MCF 10A (cell line): ENCODE measurements at regions of chr20 and their contacts with region 1.

Region 1: GRCh38 chr20:37527638-37528441 is at the start of gene BLCAP:
- DNase-seq: peak; percentile 90
- H3K4me3 Mint-ChIP-seq: peak within 1 kb of the TSS; percentile 72
- H3K27ac Mint-ChIP-seq: peak within 1 kb of the TSS; percentile 100
- H3K4me1 Mint-ChIP-seq: peaks cover 45% of the 10 kb centered on the region
- H3K27me3 Mint-ChIP-seq: no peaks in the 10 kb centered on the region
- CTCF ChIP-seq: no peak
- total RNA-seq, gene BLCAP: 88.5 and 105 TPM in 2 replicates

Region 2: DNA sequence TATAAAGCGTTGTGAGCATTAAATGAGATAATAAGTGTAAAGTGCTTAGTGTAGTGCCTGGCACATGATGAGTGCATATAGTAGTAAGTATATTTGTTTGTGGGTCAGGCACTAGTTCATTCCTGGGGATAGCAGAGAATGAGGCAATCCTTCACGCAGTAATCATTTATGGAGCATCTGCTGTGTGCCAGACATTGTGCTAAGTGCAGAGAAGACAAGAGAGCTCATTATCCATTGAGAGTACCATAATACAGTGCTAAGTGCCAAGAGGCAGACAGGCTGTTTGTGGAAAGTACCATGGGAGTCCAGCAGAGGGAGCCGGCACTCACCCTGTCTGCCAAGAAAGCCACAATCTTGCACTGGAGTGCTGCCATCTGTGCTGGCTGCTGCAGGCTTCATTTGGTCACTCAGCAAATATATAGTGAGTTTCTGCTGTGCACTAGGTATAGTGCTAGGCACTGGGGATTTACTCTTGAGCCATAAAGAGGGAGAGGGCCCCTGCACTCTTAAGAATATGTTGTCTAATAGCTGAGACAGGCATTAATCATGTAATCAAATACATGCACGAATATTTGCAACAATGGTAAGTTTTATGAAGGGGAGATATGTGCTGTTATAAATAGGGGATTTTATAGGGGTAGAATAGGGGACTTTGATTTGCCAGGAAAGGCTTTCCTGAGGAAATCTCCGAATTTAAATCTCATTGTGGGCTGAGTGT is 335.5 kb before region 1 on chr20:
- CTCF ChIA-PET with region 1: interaction called, 191 read pairs
- POLR2A ChIA-PET with region 1: interaction called, 7 read pairs
- intact Hi-C with region 1: no loop called
- DNase-seq: peak; percentile 82
- H3K4me3 Mint-ChIP-seq: no peak overlapping the region
- H3K27ac Mint-ChIP-seq: no peak overlapping the region
- H3K4me1 Mint-ChIP-seq: peaks cover 35% of the 10 kb centered on the region
- H3K27me3 Mint-ChIP-seq: no peaks in the 10 kb centered on the region
- CTCF ChIP-seq: peak; percentile 80

Region 3: DNA sequence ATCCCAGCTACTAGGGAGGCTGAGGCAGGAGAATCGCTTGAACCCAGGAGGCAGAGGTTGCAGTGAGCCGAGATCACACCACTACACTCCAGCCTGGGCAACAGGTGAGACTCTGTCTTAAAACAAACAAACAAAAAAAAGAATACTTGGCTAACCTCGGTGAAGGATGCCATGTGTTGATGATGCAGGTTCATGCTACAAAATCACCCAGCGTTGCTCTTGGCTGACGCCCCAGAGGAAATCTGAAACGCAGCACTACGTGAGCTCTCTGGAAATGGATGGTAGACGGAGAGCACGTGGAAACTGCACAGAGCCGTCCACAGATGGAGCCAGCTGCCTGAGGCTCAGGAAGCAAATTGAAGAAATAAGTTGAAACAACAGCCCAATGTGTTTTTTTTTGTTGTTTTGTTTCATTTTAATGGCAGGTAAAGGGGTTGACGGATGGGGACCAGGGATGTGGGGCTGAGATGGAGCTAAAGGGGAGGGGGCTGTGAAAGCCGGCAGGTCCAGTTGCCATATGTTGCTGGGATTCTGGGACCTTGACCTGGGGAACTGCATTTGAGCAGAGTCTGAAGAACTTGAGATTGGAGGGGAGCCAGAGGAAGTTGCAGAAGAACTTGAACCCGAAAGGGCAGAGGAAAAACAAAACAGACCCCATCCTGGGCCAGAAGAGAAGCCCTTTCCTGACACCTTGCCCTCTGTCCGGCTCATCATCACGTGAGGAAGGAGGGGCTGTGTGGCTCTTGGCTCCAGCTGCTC is 251.2 kb before region 1 on chr20:
- CTCF ChIA-PET with region 1: interaction called, 175 read pairs
- POLR2A ChIA-PET with region 1: interaction called, 43 read pairs
- intact Hi-C with region 1: no loop called
- DNase-seq: peak; percentile 78
- H3K4me3 Mint-ChIP-seq: no peak overlapping the region
- H3K27ac Mint-ChIP-seq: peak overlapping the region; percentile 34
- H3K4me1 Mint-ChIP-seq: peaks cover 13% of the 10 kb centered on the region
- H3K27me3 Mint-ChIP-seq: no peaks in the 10 kb centered on the region
- CTCF ChIP-seq: peak; percentile 14

Region 4: DNA sequence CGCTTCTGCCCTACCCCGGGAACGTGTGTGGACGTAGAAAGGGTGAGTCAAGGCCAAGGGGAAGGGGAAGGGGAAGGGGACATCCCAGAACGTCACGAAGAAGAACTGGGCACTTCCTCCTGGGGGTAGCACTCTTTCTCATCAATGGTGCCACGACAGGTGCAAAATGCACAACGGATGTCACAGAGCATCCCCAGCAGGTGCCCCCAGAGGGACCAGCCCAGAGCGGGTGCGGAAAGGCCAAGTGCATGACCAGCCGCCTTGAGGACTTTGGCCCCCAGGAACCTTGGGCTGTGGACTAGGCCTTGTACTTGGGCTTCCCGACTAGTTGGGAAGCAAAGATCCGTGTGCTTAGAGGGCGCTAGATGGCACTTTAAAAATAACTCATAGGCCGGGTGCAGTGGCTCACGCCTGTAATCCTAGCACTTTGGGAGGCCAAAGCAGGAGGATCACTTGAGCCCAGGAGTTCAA is 194.0 kb before region 1 on chr20:
- CTCF ChIA-PET with region 1: interaction called, 4 read pairs
- POLR2A ChIA-PET with region 1: interaction called, 11 read pairs
- intact Hi-C with region 1: no loop called
- DNase-seq: no peak
- H3K4me3 Mint-ChIP-seq: no peak overlapping the region
- H3K27ac Mint-ChIP-seq: no peak overlapping the region
- H3K4me1 Mint-ChIP-seq: peaks cover 17% of the 10 kb centered on the region
- H3K27me3 Mint-ChIP-seq: no peaks in the 10 kb centered on the region
- CTCF ChIP-seq: no peak

Region 5: GRCh38 chr20:37392421-37393178 is 135.2 kb before region 1 on chr20:
- CTCF ChIA-PET with region 1: interaction called, 16 read pairs
- POLR2A ChIA-PET with region 1: interaction called, 6 read pairs
- intact Hi-C with region 1: loop called (anchors 5 kb)
- DNase-seq: no peak
- H3K4me3 Mint-ChIP-seq: no peak overlapping the region
- H3K27ac Mint-ChIP-seq: no peak overlapping the region
- H3K4me1 Mint-ChIP-seq: peaks cover 19% of the 10 kb centered on the region
- H3K27me3 Mint-ChIP-seq: no peaks in the 10 kb centered on the region
- CTCF ChIP-seq: peak; percentile 24

Region 6: GRCh38 chr20:37501940-37502339 is 25.9 kb before region 1 on chr20:
- CTCF ChIA-PET with region 1: interaction called, 7 read pairs
- POLR2A ChIA-PET with region 1: interaction called, 21 read pairs
- intact Hi-C with region 1: no loop called
- DNase-seq: no peak
- H3K4me3 Mint-ChIP-seq: no peak overlapping the region
- H3K27ac Mint-ChIP-seq: no peak overlapping the region
- H3K4me1 Mint-ChIP-seq: no peaks in the 10 kb centered on the region
- H3K27me3 Mint-ChIP-seq: no peaks in the 10 kb centered on the region
- CTCF ChIP-seq: no peak

Region 7: GRCh38 chr20:37516811-37517750 is 10.8 kb before region 1 on chr20:
- CTCF ChIA-PET with region 1: interaction called, 3 read pairs
- POLR2A ChIA-PET with region 1: interaction called, 34 read pairs
- intact Hi-C with region 1: no loop called
- DNase-seq: no peak
- H3K4me3 Mint-ChIP-seq: no peak overlapping the region
- H3K27ac Mint-ChIP-seq: peak overlapping the region; percentile 39
- H3K4me1 Mint-ChIP-seq: peaks cover 19% of the 10 kb centered on the region
- H3K27me3 Mint-ChIP-seq: no peaks in the 10 kb centered on the region
- CTCF ChIP-seq: no peak